Dorsolateral prefrontal cortex (tissue), 120 donors: ENCODE measurements at regions of chr13 and their contacts with region 1.

Region 1: DNA sequence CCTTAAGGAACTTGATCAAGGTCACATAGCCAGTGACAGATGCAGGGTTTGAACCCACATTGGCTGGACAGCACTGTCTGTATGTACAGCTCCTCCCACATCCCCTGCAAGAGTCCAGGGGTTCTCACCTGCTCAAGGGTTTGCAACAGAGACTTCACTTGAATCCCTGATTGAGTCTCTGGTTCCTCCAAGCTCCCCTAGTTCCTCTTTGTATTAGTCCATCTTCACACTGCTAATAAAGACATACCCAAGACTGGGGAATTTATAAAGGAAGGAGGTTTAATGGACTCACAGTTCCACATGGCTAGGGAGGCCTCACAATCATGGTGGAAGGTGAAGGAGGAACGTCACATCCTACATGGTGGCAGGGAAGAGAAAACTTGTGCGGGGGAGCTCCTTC is 72.8 kb upstream of the CLDN10 start:
- DNase-seq: no peak
- H3K4me3 ChIP-seq: no peak overlapping the region
- H3K27ac ChIP-seq: no peak overlapping the region
- H3K27me3 ChIP-seq: peaks cover 0 to 6% (median 0%) of the 10 kb centered on the region in 45 donors
- CTCF ChIP-seq: no peak

Region 2: GRCh38 chr13:95174517-95174916 is 305.2 kb before region 1 on chr13:
- intact Hi-C with region 1: no loop called
- DNase-seq: no peak
- H3K4me3 ChIP-seq: no peak overlapping the region
- H3K27ac ChIP-seq: no peak overlapping the region
- H3K27me3 ChIP-seq: no peaks in the 10 kb centered on the region
- CTCF ChIP-seq: no peak

Region 3: DNA sequence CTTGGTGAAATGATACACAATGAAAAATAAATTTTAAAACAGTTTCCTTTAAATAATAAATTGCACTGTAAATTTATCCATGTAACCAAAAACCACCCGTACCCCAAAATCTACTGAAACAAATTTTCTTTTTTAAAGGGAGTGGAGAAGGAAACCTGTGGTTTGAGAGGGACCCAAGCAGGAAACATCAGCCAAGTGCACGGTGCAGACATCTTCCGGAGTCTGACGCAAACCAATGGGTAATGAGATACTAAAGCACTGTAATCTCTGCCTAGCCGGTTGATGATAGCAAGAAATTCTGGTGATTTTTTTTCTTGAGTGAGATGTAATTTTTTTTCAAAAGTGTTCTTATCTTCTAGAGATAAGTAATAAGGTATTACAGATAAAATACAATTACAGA is 293.9 kb before region 1 on chr13:
- intact Hi-C with region 1: loop called in 1 of 2 experiments (anchors 5 kb)
- DNase-seq: no peak
- H3K4me3 ChIP-seq: no peak overlapping the region
- H3K27ac ChIP-seq: peak overlapping the region in 3 of 59 donors; percentile 8 to 32 (median 22)
- H3K27me3 ChIP-seq: no peaks in the 10 kb centered on the region
- CTCF ChIP-seq: no peak